Mammary epithelial cell (primary cell): ENCODE measurements at regions of chr9 and their contacts with region 1.

Region 1: DNA sequence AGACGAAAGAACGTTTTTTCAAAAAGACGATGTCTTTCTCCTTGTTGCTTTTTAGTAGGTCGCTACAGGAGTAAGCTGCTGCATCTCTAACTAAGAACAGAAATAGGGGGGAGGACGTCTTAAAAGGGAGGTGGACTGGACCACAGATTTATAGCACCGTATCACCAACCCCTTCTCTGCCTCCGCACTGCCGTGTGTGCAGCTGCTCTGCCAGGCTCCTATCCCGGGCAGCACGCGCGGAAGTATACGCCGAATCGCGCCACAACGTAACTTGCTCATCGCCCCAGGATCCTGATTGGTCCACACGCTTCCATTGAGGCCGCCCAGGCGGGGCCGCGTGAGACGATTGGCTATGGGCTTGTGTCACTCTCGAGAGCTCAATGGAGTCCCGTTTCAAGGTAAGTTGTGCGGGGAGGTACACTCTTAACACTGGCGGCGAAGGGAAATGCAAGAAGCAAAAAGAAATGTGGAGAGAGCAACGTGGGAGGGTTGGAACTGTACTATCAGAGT is at the start of gene ELAVL2:
- DNase-seq: peak; percentile 100
- H3K4me3 ChIP-seq: peak within 1 kb of the TSS; percentile 45 to 71 (median 69)
- H3K27ac ChIP-seq: peak within 1 kb of the TSS; percentile 20
- H3K4me1 ChIP-seq: peaks cover 29% of the 10 kb centered on the region
- H3K27me3 ChIP-seq: peaks cover 12% of the 10 kb centered on the region
- CTCF ChIP-seq: no peak
- total RNA-seq, gene ELAVL2: 0.67 to 5.7 TPM

Region 2: DNA sequence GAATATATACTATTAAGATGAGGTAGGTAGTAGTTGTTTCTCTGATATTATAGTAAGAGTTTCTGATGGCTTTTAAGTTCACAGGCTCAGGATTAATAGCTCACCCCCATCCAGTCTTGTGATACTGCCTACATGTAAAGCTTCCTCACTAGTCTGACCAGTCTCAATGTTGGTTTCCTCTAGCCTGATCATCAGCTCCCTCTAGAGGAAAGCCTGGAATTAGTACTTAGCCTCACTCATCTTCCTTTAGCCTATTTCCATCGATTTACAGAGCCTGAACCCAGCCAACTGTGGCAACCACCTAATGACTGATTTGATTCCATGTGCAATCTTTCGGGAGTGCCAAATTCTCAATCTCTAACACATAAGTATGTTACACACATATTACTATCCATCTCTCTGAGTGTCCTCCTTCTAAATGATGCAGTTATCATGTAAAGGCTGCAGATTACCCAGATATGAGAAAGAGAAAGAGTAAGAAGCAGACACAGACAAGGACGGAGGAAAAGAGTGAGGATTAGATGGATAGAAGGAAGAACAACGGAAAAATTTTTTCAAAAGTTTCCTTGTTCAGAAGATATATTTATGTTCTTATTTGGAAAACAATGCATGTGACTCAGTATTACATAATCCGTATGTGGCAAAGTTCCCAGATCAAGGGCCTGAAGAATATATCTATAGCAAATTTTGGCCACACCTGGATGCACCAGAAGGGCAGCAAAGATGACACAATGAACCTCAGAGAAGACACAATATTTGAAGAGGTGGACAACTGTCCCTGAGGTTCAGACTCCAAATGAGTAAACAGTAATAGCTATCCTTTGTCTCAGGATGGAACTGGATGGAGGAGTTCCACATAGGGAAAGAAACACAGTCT is 333.8 kb before region 1 on chr9:
- CTCF ChIA-PET with region 1: no interaction called
- dilution Hi-C with region 1: no loop called
- in situ Hi-C with region 1: no loop called
- intact Hi-C with region 1: loop called (anchors 5 kb)
- DNase-seq: peak; percentile 57
- H3K4me3 ChIP-seq: no peak overlapping the region
- H3K27ac ChIP-seq: no peak overlapping the region
- H3K4me1 ChIP-seq: peaks cover 9% of the 10 kb centered on the region
- H3K27me3 ChIP-seq: peaks cover 2% of the 10 kb centered on the region
- CTCF ChIP-seq: peak; percentile 68 to 78

Region 3: GRCh38 chr9:23621188-23621587 is 205.0 kb before region 1 on chr9:
- CTCF ChIA-PET with region 1: no interaction called
- dilution Hi-C with region 1: no loop called
- in situ Hi-C with region 1: no loop called
- intact Hi-C with region 1: loop called (anchors 5 kb)
- DNase-seq: peak; percentile 78
- H3K4me3 ChIP-seq: no peak overlapping the region
- H3K27ac ChIP-seq: peak overlapping the region; percentile 30
- H3K4me1 ChIP-seq: peaks cover 20% of the 10 kb centered on the region
- H3K27me3 ChIP-seq: no peaks in the 10 kb centered on the region
- CTCF ChIP-seq: no peak

Region 4: DNA sequence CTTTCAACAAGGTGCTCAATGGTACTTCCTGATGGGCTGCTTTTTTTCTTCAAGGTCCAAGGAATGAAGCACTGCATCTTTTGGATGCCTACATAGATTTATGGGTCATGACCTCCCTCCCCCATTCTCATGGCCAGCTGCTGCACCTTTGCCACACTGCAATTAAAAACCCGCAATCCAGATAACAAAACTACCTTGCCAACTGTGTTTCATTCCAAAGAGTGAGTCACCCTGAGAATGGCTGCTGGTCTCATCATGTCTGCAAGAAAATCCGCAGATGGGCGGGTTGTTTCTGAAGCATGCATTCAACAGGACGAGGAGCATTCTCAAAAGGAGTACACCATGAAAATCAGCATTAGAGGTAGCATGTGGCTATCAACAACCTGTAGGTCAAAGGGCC is 139.9 kb before region 1 on chr9:
- CTCF ChIA-PET with region 1: no interaction called
- dilution Hi-C with region 1: no loop called
- in situ Hi-C with region 1: no loop called
- intact Hi-C with region 1: loop called (anchors 5 kb)
- DNase-seq: peak; percentile 88
- H3K4me3 ChIP-seq: no peak overlapping the region
- H3K27ac ChIP-seq: peak overlapping the region; percentile 38
- H3K4me1 ChIP-seq: peaks cover 38% of the 10 kb centered on the region
- H3K27me3 ChIP-seq: no peaks in the 10 kb centered on the region
- CTCF ChIP-seq: no peak

Region 5: GRCh38 chr9:23747088-23748075 is 78.8 kb before region 1 on chr9:
- CTCF ChIA-PET with region 1: no interaction called
- dilution Hi-C with region 1: no loop called
- in situ Hi-C with region 1: no loop called
- intact Hi-C with region 1: loop called (anchors 5 kb)
- DNase-seq: peak; percentile 74
- H3K4me3 ChIP-seq: peak overlapping the region in 1 of 3 experiments; percentile 4
- H3K27ac ChIP-seq: peak overlapping the region; percentile 38
- H3K4me1 ChIP-seq: peaks cover 31% of the 10 kb centered on the region
- H3K27me3 ChIP-seq: no peaks in the 10 kb centered on the region
- CTCF ChIP-seq: no peak

Region 6: GRCh38 chr9:23774266-23774665 is 51.9 kb before region 1 on chr9:
- CTCF ChIA-PET with region 1: no interaction called
- dilution Hi-C with region 1: no loop called
- in situ Hi-C with region 1: no loop called
- intact Hi-C with region 1: loop called (anchors 2 kb)
- DNase-seq: no peak
- H3K4me3 ChIP-seq: no peak overlapping the region
- H3K27ac ChIP-seq: no peak overlapping the region
- H3K4me1 ChIP-seq: peaks cover 49% of the 10 kb centered on the region
- H3K27me3 ChIP-seq: no peaks in the 10 kb centered on the region
- CTCF ChIP-seq: no peak